ENCODE measurements at regions of chr7 and their contacts with region 1.

Region 1: DNA sequence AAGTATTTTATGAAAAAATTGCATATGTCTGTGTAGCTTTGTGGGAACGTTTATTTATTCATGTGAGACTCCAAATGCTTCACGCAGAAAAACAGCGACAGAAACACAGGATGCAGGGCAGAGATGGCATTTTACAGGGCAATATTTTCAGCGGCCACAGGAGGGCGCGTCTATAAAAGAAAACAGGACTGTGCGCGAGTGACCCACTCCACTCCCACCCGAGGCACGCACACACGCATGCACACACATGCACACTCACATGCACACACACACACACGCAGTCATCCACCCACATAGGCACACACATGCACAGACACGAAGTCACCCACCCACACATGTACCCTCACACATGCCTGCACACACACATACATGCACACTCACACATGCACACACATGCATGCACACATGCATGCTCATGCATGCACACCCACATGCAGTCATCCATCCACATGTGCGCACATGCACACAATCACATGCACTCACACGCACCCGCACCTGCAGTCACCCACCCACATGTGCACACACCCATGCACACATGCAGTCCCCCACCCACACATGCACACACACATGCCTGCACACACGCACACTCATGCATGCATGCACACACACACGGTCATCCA is 96.3 kb downstream of the DNAJB6 start:
- DNase-seq: peak in 4 of 5 donors; percentile 55 to 61 (median 58)
- H3K4me3 ChIP-seq: peak overlapping the region in 1 of 2 donors; percentile 16
- H3K4me3 Mint-ChIP-seq: peak overlapping the region in 5 of 8 donors; percentile 53 to 80 (median 65)
- H3K27ac ChIP-seq: no peak overlapping the region
- H3K27ac Mint-ChIP-seq: peak overlapping the region in 5 of 7 donors; percentile 13 to 90 (median 66)
- H3K4me1 ChIP-seq: peaks cover 15% of the 10 kb centered on the region
- H3K4me1 Mint-ChIP-seq: peaks cover 12 to 20% (median 13%) of the 10 kb centered on the region in 4 donors
- H3K27me3 ChIP-seq: no peaks in the 10 kb centered on the region
- H3K27me3 Mint-ChIP-seq: peaks cover 0 to 3% of the 10 kb centered on the region in 2 donors

Region 2: DNA sequence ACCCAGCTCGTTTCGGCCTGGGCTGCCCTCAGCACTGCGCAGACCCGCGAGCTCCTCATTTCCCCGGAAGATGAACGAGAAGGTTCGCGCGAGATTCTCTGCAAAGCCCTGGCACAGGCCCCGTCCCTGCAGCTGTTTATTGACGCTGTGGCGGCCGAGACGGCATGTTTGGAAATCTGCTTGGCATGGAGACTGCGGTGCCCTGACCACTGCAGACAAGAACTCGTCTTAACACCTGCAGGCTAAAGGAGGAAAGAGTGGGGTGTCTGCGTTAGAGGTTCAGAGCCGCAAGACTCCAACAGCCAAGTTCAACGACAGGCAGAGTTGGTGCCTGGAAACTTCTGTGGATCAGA is 29.3 kb after region 1 on chr7:
- CTCF ChIA-PET with region 1: no interaction called
- POLR2A ChIA-PET with region 1: no interaction called
- intact Hi-C with region 1: no loop called
- DNase-seq: no peak
- H3K4me3 ChIP-seq: no peak overlapping the region
- H3K4me3 Mint-ChIP-seq: peak overlapping the region in 2 of 8 donors; percentile 7 to 49
- H3K27ac ChIP-seq: no peak overlapping the region
- H3K27ac Mint-ChIP-seq: peak overlapping the region in 2 of 7 donors; percentile 48 to 49
- H3K4me1 ChIP-seq: no peaks in the 10 kb centered on the region
- H3K4me1 Mint-ChIP-seq: peaks cover 8 to 14% (median 10%) of the 10 kb centered on the region in 4 donors
- H3K27me3 ChIP-seq: no peaks in the 10 kb centered on the region
- H3K27me3 Mint-ChIP-seq: no peaks in the 10 kb centered on the region

Region 3: DNA sequence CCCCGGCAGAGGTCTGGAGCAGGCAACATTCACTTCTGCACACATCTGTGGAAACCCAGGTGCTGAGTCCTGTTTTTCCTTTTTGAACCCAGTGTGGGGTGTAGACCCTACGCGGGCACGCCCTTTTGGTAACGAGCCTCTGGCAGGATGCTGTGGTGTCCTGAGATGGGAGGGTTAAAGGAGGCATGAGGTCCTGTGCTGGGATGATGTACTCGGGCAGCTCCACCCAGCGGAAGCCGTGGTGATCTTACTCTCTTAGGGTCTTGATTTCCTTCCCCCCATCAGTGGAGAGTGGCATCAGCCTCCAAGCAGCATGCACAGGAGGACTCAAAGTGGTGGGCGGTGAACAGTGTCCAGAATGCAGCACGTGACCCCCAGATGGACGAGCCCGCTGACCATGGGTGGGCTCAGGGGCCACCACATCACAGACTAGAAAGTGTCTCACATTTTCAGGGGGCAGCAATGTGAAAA is 52.3 kb after region 1 on chr7:
- CTCF ChIA-PET with region 1: interaction called, 18 read pairs
- POLR2A ChIA-PET with region 1: no interaction called
- intact Hi-C with region 1: loop called (anchors 2 kb)
- DNase-seq: peak in 2 of 5 donors; percentile 24 to 35
- H3K4me3 ChIP-seq: no peak overlapping the region
- H3K4me3 Mint-ChIP-seq: peak overlapping the region in 5 of 8 donors; percentile 2 to 51 (median 20)
- H3K27ac ChIP-seq: no peak overlapping the region
- H3K27ac Mint-ChIP-seq: peak overlapping the region in 4 of 7 donors; percentile 30 to 70 (median 55)
- H3K4me1 ChIP-seq: peaks cover 29% of the 10 kb centered on the region
- H3K4me1 Mint-ChIP-seq: peaks cover 11 to 27% (median 20%) of the 10 kb centered on the region in 4 donors
- H3K27me3 ChIP-seq: no peaks in the 10 kb centered on the region
- H3K27me3 Mint-ChIP-seq: peaks cover 0 to 2% of the 10 kb centered on the region in 2 donors

Region 4: GRCh38 chr7:157568770-157569584 is 135.9 kb after region 1 on chr7:
- CTCF ChIA-PET with region 1: no interaction called
- POLR2A ChIA-PET with region 1: no interaction called
- intact Hi-C with region 1: loop called (anchors 5 kb)
- DNase-seq: peak; percentile 62 to 80 (median 72)
- H3K4me3 ChIP-seq: peak overlapping the region in 1 of 2 donors; percentile 61
- H3K4me3 Mint-ChIP-seq: peak overlapping the region; percentile 91 to 98 (median 96)
- H3K27ac ChIP-seq: peak overlapping the region; percentile 40
- H3K27ac Mint-ChIP-seq: peak overlapping the region; percentile 79 to 98 (median 97)
- H3K4me1 ChIP-seq: peaks cover 17% of the 10 kb centered on the region
- H3K4me1 Mint-ChIP-seq: peaks cover 12 to 52% (median 29%) of the 10 kb centered on the region in 4 donors
- H3K27me3 ChIP-seq: no peaks in the 10 kb centered on the region
- H3K27me3 Mint-ChIP-seq: no peaks in the 10 kb centered on the region

Region 5: DNA sequence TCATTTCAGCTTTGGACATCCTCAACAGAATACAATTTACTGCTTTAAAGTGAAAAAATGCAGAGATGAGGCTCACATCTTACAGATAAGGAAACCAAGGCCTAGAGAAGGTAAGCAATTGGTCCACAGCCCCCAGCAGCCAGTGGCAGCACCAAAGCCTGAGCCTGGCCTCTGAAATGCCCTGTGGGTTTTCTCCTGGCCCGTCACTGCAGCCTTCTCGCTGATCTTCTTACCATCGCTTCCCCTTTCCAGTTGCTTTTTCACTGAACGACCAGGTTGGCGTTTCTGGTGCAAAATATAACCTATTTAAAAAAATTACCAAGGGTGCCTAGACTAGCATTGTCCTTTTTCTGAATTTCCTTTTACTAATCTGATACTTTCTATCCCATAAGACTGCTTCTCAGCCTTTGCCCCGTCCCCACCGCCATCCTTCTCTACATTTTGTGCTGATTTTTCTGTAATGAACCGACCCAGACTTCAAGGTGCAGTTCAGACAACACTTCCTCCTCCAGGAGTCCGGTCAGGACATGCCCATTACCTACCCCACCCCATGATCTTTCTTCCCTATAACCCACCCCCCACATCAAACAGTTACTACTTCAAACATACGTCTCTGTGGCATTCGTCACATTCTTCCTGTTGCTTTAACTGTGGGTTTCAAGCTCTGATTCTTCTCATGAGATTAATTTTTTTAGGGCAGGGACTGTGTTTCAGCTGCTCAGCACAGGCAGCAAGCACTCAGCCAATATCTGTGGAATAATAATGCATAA is 193.1 kb after region 1 on chr7:
- CTCF ChIA-PET with region 1: interaction called, 10 read pairs
- POLR2A ChIA-PET with region 1: no interaction called
- intact Hi-C with region 1: no loop called
- DNase-seq: peak; percentile 53 to 75 (median 69)
- H3K4me3 ChIP-seq: peak overlapping the region in 1 of 2 donors; percentile 13
- H3K4me3 Mint-ChIP-seq: peak overlapping the region; percentile 60 to 84 (median 81)
- H3K27ac ChIP-seq: no peak overlapping the region
- H3K27ac Mint-ChIP-seq: peak overlapping the region; percentile 7 to 96 (median 91)
- H3K4me1 ChIP-seq: peaks cover 57% of the 10 kb centered on the region
- H3K4me1 Mint-ChIP-seq: peaks cover 33 to 78% (median 61%) of the 10 kb centered on the region in 4 donors
- H3K27me3 ChIP-seq: no peaks in the 10 kb centered on the region
- H3K27me3 Mint-ChIP-seq: peaks cover 2 to 3% of the 10 kb centered on the region in 2 donors

Region 6: DNA sequence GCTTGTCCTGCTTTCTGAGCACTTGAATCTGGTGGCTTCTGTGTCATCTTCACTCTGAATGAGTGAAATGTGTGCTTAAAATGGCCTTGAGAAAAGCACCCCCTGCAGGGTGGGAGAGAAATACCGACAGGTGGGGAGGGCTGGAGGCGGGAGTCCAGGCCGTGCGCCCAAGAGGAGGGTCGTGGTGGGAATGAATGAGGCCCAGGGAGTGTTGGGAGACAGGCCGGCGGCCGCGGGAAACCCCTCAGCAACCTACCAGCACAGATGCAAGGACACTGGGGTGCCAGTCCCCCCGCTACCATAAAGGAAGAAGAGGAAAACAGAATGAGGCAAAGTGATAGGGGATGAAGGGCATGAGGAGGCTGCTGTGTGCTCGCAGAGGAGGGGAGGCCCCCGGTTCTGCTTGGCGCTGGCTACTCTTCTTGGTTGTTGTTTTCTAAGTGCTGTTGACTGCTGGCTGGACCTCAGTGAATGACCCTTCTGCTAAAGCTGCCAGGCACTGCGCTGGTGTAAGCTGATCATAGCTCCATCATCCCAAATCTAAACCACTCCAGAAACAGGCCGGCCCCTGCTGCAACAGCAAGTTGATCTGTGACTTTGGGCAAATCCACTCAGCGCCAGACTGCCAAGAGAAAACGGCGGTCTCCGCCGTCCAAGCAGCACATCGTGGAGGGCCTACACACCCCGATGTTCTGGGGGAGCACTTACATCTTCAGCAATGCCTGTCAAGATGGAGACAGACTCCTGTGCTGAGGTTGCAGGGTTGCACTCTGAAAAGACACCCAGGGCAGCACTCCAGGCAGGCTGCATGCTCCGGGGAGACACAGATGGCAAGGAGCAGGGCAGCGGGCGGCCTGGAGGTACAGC is 282.2 kb after region 1 on chr7:
- CTCF ChIA-PET with region 1: interaction called, 6 read pairs
- POLR2A ChIA-PET with region 1: no interaction called
- intact Hi-C with region 1: loop called (anchors 1 kb)
- DNase-seq: no peak
- H3K4me3 ChIP-seq: no peak overlapping the region
- H3K4me3 Mint-ChIP-seq: no peak overlapping the region
- H3K27ac ChIP-seq: no peak overlapping the region
- H3K27ac Mint-ChIP-seq: peak overlapping the region in 1 of 7 donors; percentile 78
- H3K4me1 ChIP-seq: no peaks in the 10 kb centered on the region
- H3K4me1 Mint-ChIP-seq: no peaks in the 10 kb centered on the region
- H3K27me3 ChIP-seq: no peaks in the 10 kb centered on the region
- H3K27me3 Mint-ChIP-seq: peaks cover 0 to 2% of the 10 kb centered on the region in 2 donors

Region 7: DNA sequence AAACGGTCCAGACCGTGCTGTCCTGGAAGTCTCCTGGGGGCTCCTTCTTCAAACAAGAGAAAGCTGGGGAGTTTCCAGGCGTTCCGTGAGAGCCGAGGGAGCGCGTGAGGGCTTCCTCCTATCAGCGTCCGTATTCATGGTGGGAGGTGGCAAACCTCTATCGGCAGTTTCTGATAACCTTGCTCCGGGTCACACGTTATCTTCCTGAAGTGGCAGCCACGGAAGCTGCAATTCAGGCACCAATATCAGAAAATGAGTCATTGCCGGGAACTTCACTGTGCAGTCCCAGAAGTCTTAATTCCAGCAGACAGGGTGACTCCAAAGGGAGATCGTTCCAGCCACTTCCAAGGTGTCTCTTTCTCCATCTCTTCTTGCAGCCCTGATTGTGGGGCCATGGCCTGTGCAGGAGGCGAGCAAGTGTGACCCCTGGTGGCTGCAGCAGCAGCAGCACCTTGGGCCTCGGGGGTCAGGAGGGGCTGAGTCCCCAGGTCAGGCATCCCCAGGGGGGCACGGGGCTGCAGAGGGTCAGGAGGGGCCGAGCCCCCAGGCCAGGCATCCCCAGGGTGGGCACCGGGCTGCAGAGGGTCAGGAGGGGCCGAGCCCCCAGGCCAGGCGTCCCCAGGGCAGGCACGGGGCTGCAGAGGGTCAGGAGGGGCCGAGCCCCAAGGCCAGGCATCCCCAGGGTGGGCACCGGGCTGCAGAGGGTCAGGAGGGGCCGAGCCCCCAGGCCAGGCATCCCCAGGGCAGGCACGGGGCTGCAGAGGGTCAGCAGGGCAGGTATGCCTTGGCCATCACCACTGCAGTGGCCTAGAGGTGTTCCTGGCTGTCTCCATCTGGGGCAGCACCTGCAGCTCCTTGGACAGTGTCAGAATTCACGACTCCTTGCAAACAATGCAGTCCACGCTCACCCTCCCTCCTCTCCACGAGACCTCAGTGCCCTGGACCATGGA is 442.4 kb after region 1 on chr7:
- CTCF ChIA-PET with region 1: interaction called, 6 read pairs
- POLR2A ChIA-PET with region 1: no interaction called
- intact Hi-C with region 1: loop called (anchors 1 kb)
- DNase-seq: peak; percentile 53 to 66 (median 60)
- H3K4me3 ChIP-seq: peak overlapping the region; percentile 39 to 42
- H3K4me3 Mint-ChIP-seq: peak overlapping the region; percentile 58 to 90 (median 79)
- H3K27ac ChIP-seq: no peak overlapping the region
- H3K27ac Mint-ChIP-seq: peak overlapping the region; percentile 4 to 91 (median 53)
- H3K4me1 ChIP-seq: peaks cover 22% of the 10 kb centered on the region
- H3K4me1 Mint-ChIP-seq: peaks cover 13 to 24% (median 19%) of the 10 kb centered on the region in 4 donors
- H3K27me3 ChIP-seq: no peaks in the 10 kb centered on the region
- H3K27me3 Mint-ChIP-seq: peaks cover 0 to 2% of the 10 kb centered on the region in 2 donors